Heart right ventricle (tissue), 16 donors: ENCODE measurements at regions of chr10 and their contacts with region 1.

Region 1: GRCh38 chr10:132387764-132388210 is 9.2 kb upstream of the PWWP2B start:
- DNase-seq: peak; percentile 68 to 80
- ATAC-seq: peak; percentile 58 to 81 (median 75)
- H3K4me3 ChIP-seq: no peak overlapping the region
- H3K27ac ChIP-seq: peak overlapping the region in 3 of 10 donors; percentile 11 to 52 (median 37)
- H3K4me1 ChIP-seq: peaks cover 3 to 25% (median 12%) of the 10 kb centered on the region in 9 donors
- H3K27me3 ChIP-seq: no peaks in the 10 kb centered on the region
- CTCF ChIP-seq: peak; percentile 27 to 72 (median 62)

Region 2: DNA sequence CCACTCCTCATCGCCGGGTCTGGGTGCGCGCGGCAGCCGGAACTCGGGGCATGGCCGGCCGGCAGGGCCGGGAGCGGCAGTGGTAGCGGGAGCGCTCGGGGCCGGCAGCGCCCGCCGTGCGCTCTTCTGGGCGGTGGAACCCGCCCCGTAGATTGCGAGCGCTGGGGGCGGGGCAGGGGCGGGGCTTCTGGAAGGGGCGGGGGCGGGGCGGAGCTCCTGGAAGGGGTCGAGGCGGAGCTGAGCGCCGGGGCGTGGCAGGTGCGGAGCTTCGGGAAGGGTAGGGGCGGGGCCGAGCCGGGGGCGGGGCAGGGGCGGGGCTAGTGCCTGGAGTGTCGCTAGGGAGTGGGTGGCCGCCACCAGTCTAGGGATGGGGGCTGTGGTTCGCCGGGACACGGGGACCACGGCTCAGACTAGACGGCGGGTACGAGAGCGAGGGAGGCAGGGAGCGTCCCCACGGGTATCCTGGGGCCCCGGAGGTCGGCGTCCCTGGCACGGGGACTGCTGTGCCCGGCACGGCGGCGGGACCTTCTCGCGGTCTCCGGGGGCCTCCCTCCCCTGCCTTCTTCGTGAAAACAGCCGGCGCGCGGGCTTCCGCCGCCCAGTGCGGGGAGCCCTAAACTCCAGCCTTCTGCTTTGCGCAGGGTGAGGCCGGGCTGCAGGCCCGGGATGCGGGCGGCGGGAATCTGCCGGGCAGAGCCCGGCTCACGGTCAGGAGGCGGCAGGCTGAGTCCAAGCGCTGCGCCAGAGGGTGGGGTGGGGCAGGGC is 79.8 kb before region 1 on chr10 and contains the start of gene STK32C:
- intact Hi-C with region 1: no loop called
- DNase-seq: peak; percentile 90 to 94
- ATAC-seq: peak; percentile 95 to 98 (median 98)
- H3K4me3 ChIP-seq: peak within 1 kb of the TSS; percentile 61 to 98 (median 88)
- H3K27ac ChIP-seq: peak within 1 kb of the TSS in 9 of 10 donors; percentile 60 to 80 (median 75)
- H3K4me1 ChIP-seq: peaks cover 4 to 19% (median 17%) of the 10 kb centered on the region in 9 donors
- H3K27me3 ChIP-seq: peaks cover 0 to 18% (median 0%) of the 10 kb centered on the region in 7 donors
- CTCF ChIP-seq: peak in 1 of 9 donors; percentile 19
- total RNA-seq, gene STK32C: 2.7 to 7.7 (median 5.7) TPM

Region 3: GRCh38 chr10:132434405-132435005 is 46.7 kb after region 1 on chr10:
- intact Hi-C with region 1: no loop called
- DNase-seq: peak; percentile 65
- ATAC-seq: peak in 2 of 8 donors; percentile 25 to 33
- H3K4me3 ChIP-seq: peak overlapping the region in 1 of 10 donors; percentile 14
- H3K27ac ChIP-seq: peak overlapping the region in 1 of 10 donors; percentile 57
- H3K4me1 ChIP-seq: peaks cover 0 to 18% (median 0%) of the 10 kb centered on the region in 9 donors
- H3K27me3 ChIP-seq: no peaks in the 10 kb centered on the region
- CTCF ChIP-seq: no peak

Region 4: DNA sequence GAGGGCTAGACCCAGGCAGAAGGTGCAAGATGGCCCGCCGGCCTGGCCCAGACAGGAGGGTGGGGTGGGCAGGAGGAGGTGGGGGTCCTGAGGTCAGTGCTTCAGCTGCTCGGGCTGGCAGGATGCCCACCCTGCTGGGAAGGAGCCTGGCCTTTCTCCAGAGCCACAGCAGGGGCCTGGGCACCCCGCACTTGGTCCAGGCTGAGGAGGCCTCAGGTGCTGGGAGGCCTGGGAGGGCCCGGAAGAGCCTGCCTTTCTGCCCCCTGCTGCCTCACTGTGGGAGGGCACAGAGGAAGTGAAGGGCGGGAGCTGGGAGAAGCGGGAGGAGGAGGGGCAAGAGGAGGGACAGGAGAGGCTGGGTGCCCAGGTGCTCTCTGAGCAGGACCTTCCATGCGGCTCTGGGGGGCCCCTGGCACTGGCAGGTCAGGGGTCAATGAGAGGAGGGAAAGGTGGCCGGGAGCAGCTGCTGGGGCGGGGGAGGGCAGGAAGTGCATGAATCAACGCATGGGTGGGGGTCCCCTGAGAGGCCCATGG is 58.9 kb after region 1 on chr10:
- intact Hi-C with region 1: loop called in 3 of 10 experiments (anchors 2 to 5 kb)
- DNase-seq: no peak
- ATAC-seq: peak; percentile 59 to 77 (median 69)
- H3K4me3 ChIP-seq: peak overlapping the region in 1 of 10 donors; percentile 24
- H3K27ac ChIP-seq: peak overlapping the region in 3 of 10 donors; percentile 44 to 92 (median 63)
- H3K4me1 ChIP-seq: peaks cover 0 to 40% (median 16%) of the 10 kb centered on the region in 9 donors
- H3K27me3 ChIP-seq: no peaks in the 10 kb centered on the region
- CTCF ChIP-seq: peak in 8 of 9 donors; percentile 14 to 59 (median 44)

Region 5: DNA sequence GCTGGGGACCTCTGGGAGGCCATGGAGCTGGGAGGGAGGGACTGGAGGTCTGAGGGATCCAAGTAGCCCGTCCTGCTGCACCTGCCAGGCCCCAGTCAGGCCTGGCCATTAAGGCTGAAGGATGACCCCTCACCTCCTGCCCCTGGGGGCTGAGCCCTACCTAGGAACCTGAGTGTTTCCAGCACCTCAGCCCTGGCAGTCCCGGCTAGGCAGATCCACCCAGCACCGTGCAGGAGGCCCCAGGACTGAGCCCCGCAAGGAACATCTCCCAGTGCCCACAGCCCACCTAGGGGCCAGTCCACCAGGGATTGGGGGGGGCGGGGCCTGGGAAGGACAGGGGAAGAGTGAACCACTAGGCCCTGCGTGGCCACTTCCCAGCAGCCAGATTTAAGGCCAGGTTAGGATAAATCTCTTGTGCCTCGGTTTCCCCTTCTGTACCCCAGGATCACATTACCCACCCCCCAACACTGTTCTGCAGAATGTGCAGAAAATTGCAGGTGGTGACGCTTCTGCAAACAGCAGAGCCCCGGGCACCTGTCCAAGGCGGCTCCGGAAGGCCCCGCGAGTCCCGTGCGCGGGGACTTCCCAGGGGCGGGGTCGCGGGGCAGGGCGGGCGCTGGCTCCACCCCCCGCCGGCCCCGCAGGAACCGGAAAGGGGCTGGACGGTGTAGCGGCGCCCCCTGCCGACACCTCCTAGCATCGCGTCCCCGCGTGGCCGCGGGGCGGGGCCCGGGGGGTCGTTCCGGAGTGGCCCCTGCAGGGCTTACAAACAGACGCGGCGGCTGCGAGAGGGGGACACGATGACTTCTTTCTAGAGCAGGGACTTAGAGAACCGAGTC is 65.1 kb after region 1 on chr10:
- intact Hi-C with region 1: loop called (anchors 1 to 5 kb)
- DNase-seq: peak; percentile 79 to 88
- ATAC-seq: peak; percentile 76 to 90 (median 85)
- H3K4me3 ChIP-seq: peak overlapping the region in 8 of 10 donors; percentile 10 to 37 (median 22)
- H3K27ac ChIP-seq: peak overlapping the region in 2 of 10 donors; percentile 15 to 48
- H3K4me1 ChIP-seq: peaks cover 7 to 22% (median 18%) of the 10 kb centered on the region in 9 donors
- H3K27me3 ChIP-seq: peaks cover 0 to 8% (median 3%) of the 10 kb centered on the region in 7 donors
- CTCF ChIP-seq: peak; percentile 90 to 98 (median 97)

Region 6: GRCh38 chr10:132643709-132644526 is 256.1 kb after region 1 on chr10:
- intact Hi-C with region 1: loop called in 4 of 10 experiments (anchors 5 to 10 kb)
- DNase-seq: no peak
- ATAC-seq: peak in 2 of 8 donors; percentile 26
- H3K4me3 ChIP-seq: no peak overlapping the region
- H3K27ac ChIP-seq: no peak overlapping the region
- H3K4me1 ChIP-seq: peaks cover 0 to 16% (median 0%) of the 10 kb centered on the region in 9 donors
- H3K27me3 ChIP-seq: no peaks in the 10 kb centered on the region
- CTCF ChIP-seq: no peak